Heart right ventricle (tissue), 16 donors: ENCODE measurements at regions of chr1 and their contacts with region 1.

Region 1: GRCh38 chr1:56094168-56094567 is 485.2 kb downstream of the PLPP3 start:
- DNase-seq: no peak
- ATAC-seq: no peak
- H3K4me3 ChIP-seq: no peak overlapping the region
- H3K27ac ChIP-seq: no peak overlapping the region
- H3K4me1 ChIP-seq: peaks cover 0 to 15% (median 0%) of the 10 kb centered on the region in 9 donors
- H3K27me3 ChIP-seq: no peaks in the 10 kb centered on the region
- CTCF ChIP-seq: no peak

Region 2: DNA sequence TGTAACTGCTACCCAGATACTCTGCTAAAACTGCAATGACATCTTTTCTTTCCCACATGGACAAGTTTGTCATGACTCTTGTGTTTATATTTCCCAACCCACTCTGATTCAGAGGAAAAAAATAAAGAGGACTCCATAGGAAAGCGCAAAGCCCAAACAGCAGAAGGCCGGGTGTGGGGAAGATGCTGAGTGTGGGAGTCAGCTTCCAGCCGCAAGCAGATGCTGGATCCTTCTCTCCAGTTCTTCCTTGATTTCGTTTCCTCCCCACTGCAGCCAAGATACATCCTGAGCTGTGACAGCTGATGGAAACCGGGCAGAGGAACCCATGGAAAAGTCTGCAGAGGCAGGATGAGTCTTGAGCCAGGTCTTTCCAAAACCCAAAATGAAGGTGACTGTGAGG is 13.0 kb before region 1 on chr1:
- intact Hi-C with region 1: loop called in 1 of 10 experiments (anchors 1 kb)
- DNase-seq: peak; percentile 27 to 40
- ATAC-seq: peak in 7 of 8 donors; percentile 51 to 88 (median 83)
- H3K4me3 ChIP-seq: no peak overlapping the region
- H3K27ac ChIP-seq: peak overlapping the region in 4 of 10 donors; percentile 8 to 47 (median 32)
- H3K4me1 ChIP-seq: peaks cover 0 to 13% (median 5%) of the 10 kb centered on the region in 9 donors
- H3K27me3 ChIP-seq: no peaks in the 10 kb centered on the region
- CTCF ChIP-seq: no peak